Left ventricle myocardium inferior (tissue), 1 donor: ENCODE measurements at regions of chr17 and their contacts with region 1.

Region 1: GRCh38 chr17:34146440-34147043 is 108.5 kb upstream of the CCL2 start:
- DNase-seq: peak; percentile 48
- H3K4me3 ChIP-seq: no peak overlapping the region
- H3K27ac ChIP-seq: no peak overlapping the region
- H3K4me1 ChIP-seq: no peaks in the 10 kb centered on the region
- H3K27me3 ChIP-seq: peaks cover 64% of the 10 kb centered on the region
- CTCF ChIP-seq: peak; percentile 75

Region 2: GRCh38 chr17:33779225-33779591 is 367.3 kb before region 1 on chr17:
- intact Hi-C with region 1: loop called (anchors 10 kb)
- DNase-seq: peak; percentile 23
- H3K4me3 ChIP-seq: no peak overlapping the region
- H3K27ac ChIP-seq: no peak overlapping the region
- H3K4me1 ChIP-seq: no peaks in the 10 kb centered on the region
- H3K27me3 ChIP-seq: peaks cover 87% of the 10 kb centered on the region
- CTCF ChIP-seq: peak; percentile 99

Region 3: GRCh38 chr17:33933576-33933975 is 213.0 kb before region 1 on chr17:
- intact Hi-C with region 1: loop called (anchors 10 kb)
- DNase-seq: no peak
- H3K4me3 ChIP-seq: no peak overlapping the region
- H3K27ac ChIP-seq: no peak overlapping the region
- H3K4me1 ChIP-seq: peaks cover 5% of the 10 kb centered on the region
- H3K27me3 ChIP-seq: peaks cover 34% of the 10 kb centered on the region
- CTCF ChIP-seq: no peak